Sciatic nerve (tissue), 2 donors: ENCODE measurements at regions of chr5 and their contacts with region 1.

Region 1: DNA sequence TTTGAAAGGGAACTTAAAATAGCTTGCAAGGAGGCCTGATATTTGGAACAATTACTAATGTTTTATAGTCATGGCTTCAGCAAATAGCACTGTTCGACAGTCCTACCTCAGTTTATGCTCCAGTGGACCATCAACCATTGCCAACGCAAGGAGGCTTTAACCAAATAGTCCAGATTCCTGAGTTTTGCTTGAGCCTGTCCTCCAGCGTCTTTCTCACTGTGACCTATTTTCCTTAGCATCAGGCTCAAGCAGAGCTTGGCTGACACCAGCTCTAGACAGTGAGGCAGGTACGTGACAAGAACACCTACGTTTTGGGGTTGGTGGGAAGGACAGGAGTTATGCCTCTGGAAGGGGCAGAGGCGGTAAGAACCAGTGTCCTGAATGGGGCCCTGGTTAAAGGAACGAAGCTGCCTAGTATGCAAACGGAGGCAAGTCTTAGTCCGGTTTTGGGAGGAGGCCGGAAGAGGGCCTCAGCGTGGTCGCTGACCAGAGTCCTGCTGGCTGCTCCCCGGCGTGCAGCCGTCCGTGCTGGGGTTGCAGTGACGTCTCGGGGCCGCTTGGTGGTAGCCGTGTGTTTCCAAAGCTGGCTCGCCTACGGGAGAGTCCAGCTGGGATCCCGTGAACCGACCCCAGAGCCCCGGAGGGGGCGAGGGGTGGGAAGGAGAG is 998 bp upstream of the FGF18 start:
- DNase-seq: peak; percentile 88
- ATAC-seq: peak; percentile 93

Region 2: DNA sequence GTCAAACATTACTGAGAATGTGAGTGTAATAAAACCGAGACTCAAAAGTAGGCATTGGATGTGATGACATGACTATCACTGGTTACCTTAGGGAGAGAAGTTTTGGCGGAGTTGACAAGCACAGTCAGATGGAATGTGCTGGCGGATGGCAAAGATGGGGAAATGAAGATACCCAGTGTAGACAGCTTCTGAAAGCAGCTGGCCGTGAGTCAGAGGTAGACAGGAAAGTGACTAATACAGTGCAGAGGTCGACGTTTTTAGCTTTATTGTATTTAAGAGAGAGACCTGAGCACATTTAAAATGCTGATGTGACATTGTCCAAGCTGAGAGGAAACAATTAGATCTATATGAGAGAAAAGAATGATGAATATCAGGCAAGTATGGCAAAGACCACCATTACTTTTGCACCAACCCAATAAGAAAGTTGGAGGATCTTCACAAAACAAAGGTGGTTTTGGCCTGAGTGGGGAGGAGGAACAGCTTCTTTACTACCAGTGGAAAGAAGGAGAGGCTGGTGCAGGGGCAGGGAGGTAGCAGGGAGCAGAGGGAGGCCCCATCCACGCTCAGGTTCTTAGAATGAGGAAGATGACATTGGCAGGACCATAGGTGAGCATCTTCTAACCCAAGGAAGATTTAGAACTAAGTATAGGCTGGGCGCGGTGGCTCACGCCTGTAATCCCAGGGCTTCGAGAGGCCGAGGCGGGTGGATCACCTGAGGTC is 951.3 kb before region 1 on chr5:
- intact Hi-C with region 1: no loop called
- DNase-seq: no peak
- ATAC-seq: peak; percentile 49

Region 3: GRCh38 chr5:171543148-171543815 is 124.8 kb after region 1 on chr5:
- intact Hi-C with region 1: no loop called
- DNase-seq: no peak
- ATAC-seq: peak; percentile 14

Region 4: DNA sequence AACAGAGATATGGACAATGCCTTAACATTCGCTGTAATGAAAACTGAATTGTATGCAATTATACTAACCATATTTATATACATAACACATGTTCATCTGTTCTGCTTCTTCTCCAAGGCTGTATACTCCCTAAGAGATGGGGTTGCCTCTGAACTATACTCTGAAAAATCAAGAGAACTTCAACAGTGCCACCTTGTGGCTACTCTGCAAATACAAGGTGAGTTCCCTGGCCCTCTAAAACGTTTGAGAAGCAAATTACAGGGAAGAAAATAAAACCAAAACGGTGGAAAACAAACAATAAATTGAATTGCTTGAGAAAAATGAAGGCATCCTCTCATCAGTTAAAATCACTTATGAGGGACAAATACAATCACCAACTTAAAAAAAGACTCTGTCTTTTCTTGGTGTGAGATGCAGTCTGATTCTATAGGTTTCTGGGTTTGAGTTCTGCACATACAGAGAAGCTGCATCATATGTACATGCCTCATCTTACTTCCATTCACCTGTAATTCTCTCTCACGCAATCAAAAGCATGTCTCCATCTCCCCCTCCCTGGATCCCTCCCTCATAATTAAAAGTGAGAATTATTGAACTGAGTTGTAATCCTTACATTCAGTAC is 489.4 kb after region 1 on chr5:
- intact Hi-C with region 1: loop called (anchors 10 kb)
- DNase-seq: no peak
- ATAC-seq: peak; percentile 77